GM10248 (cell line): ENCODE measurements at regions of chr7 and their contacts with region 1.

Region 1: GRCh38 chr7:8295638-8296361 is 33.8 kb upstream of the ICA1 start:
- DNase-seq: peak; percentile 72
- CTCF ChIP-seq: peak; percentile 81

Region 2: DNA sequence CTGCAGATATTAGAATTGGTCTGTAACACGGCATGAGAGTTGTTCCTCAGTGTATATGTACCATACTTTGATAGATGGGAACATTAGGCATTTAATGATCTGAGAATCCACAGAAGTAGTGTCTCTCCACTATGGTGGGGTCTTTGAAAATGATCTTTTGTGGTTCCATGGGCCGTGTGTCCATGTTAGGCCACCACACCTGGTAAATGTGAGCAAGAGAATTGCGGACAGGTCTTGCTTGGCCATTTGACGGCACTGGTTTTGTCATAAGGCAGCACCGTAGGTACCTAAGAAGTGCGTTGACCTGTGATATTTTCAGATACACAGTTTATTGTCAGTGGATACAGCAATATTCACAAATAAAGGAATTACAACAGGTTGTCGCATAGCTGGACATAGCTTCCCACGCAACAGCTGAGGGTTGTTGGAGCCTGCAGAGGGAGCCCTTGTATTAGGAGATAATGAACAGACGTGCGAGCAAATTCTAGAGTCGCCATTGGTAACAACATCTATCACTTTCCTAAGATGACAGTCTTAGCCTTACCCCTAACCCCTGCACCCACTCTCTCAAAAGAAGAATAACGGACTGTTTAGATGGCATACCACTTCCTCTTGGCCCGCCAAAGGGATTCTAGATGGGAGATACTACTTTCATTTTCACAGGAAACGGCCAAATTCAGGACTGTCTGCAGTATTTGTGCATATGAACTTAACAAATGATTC is 871.5 kb before region 1 on chr7:
- CTCF ChIA-PET with region 1: interaction called, 21 read pairs
- POLR2A ChIA-PET with region 1: no interaction called
- DNase-seq: peak; percentile 47
- CTCF ChIP-seq: peak; percentile 74

Region 3: GRCh38 chr7:8261711-8262695 is 33.8 kb before region 1 on chr7 and contains the start of gene ICA1:
- CTCF ChIA-PET with region 1: interaction called, 13 read pairs
- POLR2A ChIA-PET with region 1: no interaction called
- DNase-seq: peak; percentile 24
- CTCF ChIP-seq: no peak

Region 4: GRCh38 chr7:8277394-8277982 is 18.3 kb before region 1 on chr7:
- CTCF ChIA-PET with region 1: interaction called, 16 read pairs
- POLR2A ChIA-PET with region 1: no interaction called
- DNase-seq: no peak
- CTCF ChIP-seq: no peak

Region 5: DNA sequence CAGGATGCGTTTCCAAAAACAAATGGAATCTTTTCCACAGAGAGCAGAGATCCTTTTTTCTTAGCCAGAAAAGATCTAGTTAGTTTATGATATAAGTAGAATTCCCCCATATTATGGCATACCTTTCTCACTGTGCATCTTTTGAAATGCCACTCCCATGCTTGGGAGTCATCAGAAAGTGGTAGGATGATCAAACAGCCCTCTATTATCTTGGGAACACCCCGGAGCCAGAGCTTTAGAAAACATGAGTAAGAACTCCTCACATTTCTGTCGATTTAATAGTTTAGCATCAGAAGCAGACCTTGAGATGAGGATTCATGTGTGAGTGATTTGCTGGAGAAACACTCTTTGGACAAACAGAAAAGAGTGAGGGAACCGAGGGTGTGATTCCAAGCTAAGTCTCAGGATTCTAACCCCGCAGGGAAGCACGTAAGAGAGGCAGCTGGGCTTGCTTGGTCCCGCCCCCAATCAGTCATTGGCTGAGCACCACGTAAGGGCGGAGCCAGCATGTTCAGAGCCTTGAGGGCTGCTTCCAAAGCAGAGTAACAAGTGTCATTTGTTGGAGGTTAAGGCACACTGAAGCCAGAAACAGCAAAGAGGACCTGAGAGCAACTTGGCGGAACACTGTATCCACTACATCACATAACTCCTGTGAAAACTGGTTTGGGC is 93.9 kb after region 1 on chr7:
- CTCF ChIA-PET with region 1: no interaction called
- POLR2A ChIA-PET with region 1: no interaction called
- DNase-seq: no peak
- CTCF ChIP-seq: no peak